CD4-positive, alpha-beta T cell (primary cell): ENCODE measurements at regions of chr2 and their contacts with region 1.

Region 1: DNA sequence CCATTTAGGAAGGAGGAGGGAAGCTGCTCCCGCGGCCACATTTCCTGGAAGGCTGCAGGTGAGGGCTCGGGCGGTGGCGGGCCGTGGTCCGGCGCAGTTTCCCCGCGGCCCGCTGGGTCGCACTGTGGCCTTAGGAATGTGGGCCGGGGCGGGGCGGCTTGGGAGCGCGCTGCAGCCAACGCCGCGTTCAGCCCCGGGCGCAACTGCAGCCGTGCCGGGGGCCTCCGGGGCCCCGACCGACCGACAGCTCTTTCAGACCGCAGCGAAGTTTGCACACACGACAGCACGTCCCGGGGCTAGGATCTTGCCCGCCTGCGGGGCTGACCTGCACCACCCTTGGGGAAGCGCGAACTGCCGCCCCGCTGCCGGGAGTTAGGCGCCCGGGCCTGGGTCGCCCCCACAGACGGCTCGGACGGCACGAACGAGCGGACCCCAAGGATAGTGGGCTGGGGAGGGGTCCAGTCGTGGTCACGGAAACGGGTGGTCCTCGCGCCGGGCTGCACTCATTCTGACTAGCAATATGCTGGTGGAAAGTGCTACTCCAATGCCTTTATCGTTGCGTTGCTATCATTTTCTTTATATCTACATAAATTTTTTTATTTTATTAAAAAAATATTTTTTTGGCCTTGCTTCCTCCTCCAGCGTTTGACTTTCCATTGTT is 69.9 kb upstream of the DLX2 start:
- DNase-seq: peak in 13 of 14 experiments; percentile 45 to 83 (median 60)
- ATAC-seq: peak; percentile 96
- H3K4me3 ChIP-seq: peak overlapping the region; percentile 59
- H3K4me3 Mint-ChIP-seq: peak overlapping the region; percentile 74
- H3K27ac ChIP-seq: no peak overlapping the region
- H3K27ac Mint-ChIP-seq: no peak overlapping the region
- H3K4me1 ChIP-seq: peaks cover 12% of the 10 kb centered on the region
- H3K4me1 Mint-ChIP-seq: no peaks in the 10 kb centered on the region
- H3K27me3 ChIP-seq: peaks cover 0 to 6% of the 10 kb centered on the region in 2 experiments
- H3K27me3 Mint-ChIP-seq: no peaks in the 10 kb centered on the region
- CTCF ChIP-seq: peak; percentile 64

Region 2: DNA sequence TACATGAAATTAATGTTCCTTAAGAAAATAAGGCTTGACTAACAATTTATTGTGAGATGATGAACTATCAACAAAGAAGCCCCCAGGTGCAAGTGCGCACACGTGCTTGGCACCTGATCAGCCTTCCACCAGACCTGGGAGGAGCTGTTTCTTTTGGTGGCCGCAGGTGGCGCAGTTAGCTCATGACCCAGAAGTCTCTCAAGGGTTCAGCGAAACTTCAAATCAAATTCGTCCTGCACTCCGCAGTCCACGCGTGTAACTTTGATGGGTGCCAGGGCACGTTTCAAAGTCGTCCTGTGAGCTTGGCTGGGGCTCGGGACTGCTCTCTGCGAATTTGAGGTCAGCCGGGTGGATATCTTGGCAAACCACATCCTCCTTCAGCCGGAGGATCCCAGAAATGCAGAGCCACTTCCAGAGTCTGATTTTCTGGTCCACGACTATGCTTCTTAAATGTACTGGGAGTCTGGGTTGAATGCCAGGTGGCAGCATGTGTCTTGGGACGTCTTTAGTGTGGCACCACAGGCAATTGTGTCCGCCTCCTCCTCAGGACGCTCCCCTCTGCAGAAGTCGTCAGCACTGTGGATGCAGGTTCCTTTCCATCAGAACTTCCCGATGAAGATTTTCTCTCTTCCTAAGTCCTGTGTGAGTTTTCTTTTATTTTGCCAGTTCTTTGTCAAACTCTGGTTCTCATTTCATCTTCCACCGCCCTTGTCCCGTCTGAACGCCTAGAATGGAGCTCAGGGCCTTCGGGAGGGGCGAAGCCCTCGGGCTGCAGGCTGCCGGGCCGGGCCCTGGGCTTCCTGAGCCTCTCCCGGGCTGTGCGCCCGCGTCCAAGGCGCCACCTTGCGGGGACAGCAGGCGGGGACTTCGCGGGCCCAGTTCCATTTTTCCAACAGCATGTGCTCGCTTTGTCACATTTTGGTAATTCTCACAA is 501.7 kb after region 1 on chr2:
- CTCF ChIA-PET with region 1: no interaction called
- POLR2A ChIA-PET with region 1: no interaction called
- intact Hi-C with region 1: loop called in 1 of 2 experiments (anchors 2 kb)
- DNase-seq: peak in 12 of 14 experiments; percentile 5 to 59 (median 22)
- ATAC-seq: peak; percentile 41
- H3K4me3 ChIP-seq: peak overlapping the region; percentile 21
- H3K4me3 Mint-ChIP-seq: peak overlapping the region; percentile 31
- H3K27ac ChIP-seq: no peak overlapping the region
- H3K27ac Mint-ChIP-seq: no peak overlapping the region
- H3K4me1 ChIP-seq: peaks cover 5% of the 10 kb centered on the region
- H3K4me1 Mint-ChIP-seq: no peaks in the 10 kb centered on the region
- H3K27me3 ChIP-seq: no peaks in the 10 kb centered on the region
- H3K27me3 Mint-ChIP-seq: peaks cover 8% of the 10 kb centered on the region
- CTCF ChIP-seq: peak; percentile 59

Region 3: DNA sequence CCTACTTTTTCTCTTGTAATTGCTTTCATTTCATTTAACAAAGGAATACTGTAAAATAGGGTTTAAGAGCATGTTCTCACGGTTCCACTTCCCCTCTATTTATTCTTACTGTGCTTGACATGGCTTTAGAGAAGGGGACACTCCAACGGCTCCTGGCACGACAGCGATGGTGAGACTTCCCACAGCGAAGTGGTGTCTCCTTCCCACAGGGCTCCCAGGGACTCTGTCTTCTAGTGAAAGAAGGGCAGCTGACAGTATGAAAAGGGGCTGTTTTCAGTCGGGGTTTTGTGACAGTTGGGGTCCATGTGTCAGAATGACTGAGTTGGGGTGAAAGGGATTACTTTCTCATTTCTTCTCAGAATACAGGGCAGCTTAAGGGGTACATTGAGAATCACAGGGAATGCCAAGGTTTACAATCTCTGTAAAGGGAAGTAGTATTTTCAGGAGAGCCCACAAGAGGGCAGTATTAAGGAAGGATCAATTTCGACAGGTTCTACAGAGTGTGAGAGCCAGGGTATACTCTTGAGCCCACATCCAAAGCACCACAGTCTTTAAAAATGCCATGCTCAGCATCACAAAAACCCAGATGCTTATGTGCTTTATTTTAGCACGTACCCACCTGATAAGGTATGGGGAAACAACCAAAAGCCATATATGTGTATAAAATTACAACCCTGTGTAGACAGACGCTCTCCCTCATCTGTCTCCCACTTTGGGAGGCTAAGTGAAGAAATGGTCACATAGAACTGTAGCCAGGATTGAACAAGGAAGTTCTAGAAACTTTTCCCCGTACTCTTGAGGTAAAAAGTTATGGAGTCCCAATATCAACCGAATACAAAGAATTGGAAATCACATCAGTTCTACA is 531.7 kb after region 1 on chr2:
- CTCF ChIA-PET with region 1: no interaction called
- POLR2A ChIA-PET with region 1: no interaction called
- intact Hi-C with region 1: loop called in 1 of 2 experiments (anchors 10 kb)
- DNase-seq: peak in 3 of 14 experiments; percentile 8 to 22 (median 10)
- ATAC-seq: no peak
- H3K4me3 ChIP-seq: no peak overlapping the region
- H3K4me3 Mint-ChIP-seq: no peak overlapping the region
- H3K27ac ChIP-seq: no peak overlapping the region
- H3K27ac Mint-ChIP-seq: no peak overlapping the region
- H3K4me1 ChIP-seq: no peaks in the 10 kb centered on the region
- H3K4me1 Mint-ChIP-seq: no peaks in the 10 kb centered on the region
- H3K27me3 ChIP-seq: no peaks in the 10 kb centered on the region
- H3K27me3 Mint-ChIP-seq: peaks cover 14% of the 10 kb centered on the region
- CTCF ChIP-seq: peak; percentile 51